GM12878 (cell line): ENCODE measurements at regions of chr14 and their contacts with region 1.

Region 1: DNA sequence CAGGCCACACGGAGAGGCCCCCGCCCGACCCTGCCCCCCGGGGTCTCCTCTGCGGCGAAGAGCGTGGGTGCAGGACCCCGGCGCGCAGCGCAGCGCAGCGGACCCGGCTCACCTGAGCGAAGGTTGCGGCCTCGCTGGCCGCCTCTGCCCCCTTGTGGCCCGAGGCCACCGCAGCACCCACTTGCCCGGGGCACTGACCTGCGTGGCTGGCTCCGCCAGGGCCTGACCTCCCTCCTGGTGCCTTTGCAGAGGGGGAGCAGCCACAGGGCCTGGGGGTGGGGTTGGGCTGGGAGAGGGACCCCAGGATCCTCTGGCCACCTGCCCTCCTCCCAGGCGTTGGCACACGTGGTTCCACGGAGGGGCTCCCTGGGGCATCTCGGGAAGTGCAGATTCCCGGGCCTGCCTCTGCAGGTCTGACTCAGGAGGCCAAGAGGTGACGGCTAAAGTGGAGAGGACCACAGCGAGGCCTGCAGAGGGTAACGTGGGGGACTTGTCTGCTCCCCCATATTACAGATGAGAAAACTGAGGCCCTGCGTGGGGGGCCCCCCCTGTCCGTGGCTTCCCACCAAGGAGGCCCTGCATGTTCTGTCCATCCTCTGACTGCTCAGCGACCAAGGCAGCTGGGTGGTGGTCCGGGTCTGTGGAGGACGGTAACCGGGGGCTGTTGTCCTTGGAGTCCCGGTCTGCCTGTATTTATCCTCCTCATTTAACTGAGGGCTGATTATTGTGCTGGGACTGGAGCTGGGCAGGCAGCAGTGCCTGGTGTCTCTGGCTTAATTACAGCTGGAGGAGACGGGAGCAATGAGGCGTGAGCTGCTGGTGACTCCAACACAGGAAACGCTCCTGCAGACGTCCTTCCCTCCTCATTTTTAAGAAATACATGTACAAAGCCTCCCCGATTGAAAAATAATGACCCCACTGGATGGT is 67.9 kb upstream of the BEGAIN start:
- DNase-seq: no peak
- ATAC-seq: peak; percentile 92
- H3K4me3 ChIP-seq: no peak overlapping the region
- H3K27ac ChIP-seq: no peak overlapping the region
- H3K4me1 ChIP-seq: peaks cover 8% of the 10 kb centered on the region; the same call in 1 of the 2 replicates
- H3K27me3 ChIP-seq: no peaks in the 10 kb centered on the region; a peak in 2 of 4 replicates
- CTCF ChIP-seq: peak; percentile 52 to 71 (median 54)
- EP300 ChIP-seq: no peak
- POLR2A ChIP-seq: no peak
- RAD21 ChIP-seq: peak; percentile 48

Region 2: GRCh38 chr14:100440187-100440631 is 214.9 kb before region 1 on chr14:
- CTCF ChIA-PET with region 1: interaction called, 13 read pairs
- POLR2A ChIA-PET with region 1: no interaction called
- RAD21 ChIA-PET with region 1: interaction called, 4 read pairs
- SMC1A ChIA-PET with region 1: interaction called, 4 read pairs
- in situ Hi-C with region 1: no loop called
- intact Hi-C with region 1: no loop called
- DNase-seq: no peak
- ATAC-seq: peak; percentile 78
- H3K4me3 ChIP-seq: no peak overlapping the region
- H3K27ac ChIP-seq: no peak overlapping the region
- H3K4me1 ChIP-seq: peaks cover under 1% of the 10 kb centered on the region; the same call in 1 of the 2 replicates
- H3K27me3 ChIP-seq: no peaks in the 10 kb centered on the region
- CTCF ChIP-seq: peak; percentile 43 to 71 (median 51); a peak in 5 of 6 replicates
- EP300 ChIP-seq: no peak
- POLR2A ChIP-seq: no peak
- RAD21 ChIP-seq: peak; percentile 83

Region 3: GRCh38 chr14:100677554-100678468 is 22.7 kb after region 1 on chr14:
- CTCF ChIA-PET with region 1: no interaction called
- POLR2A ChIA-PET with region 1: no interaction called
- RAD21 ChIA-PET with region 1: no interaction called
- SMC1A ChIA-PET with region 1: no interaction called
- in situ Hi-C with region 1: no loop called
- intact Hi-C with region 1: no loop called
- DNase-seq: no peak
- ATAC-seq: no peak
- H3K4me3 ChIP-seq: no peak overlapping the region
- H3K27ac ChIP-seq: no peak overlapping the region
- H3K4me1 ChIP-seq: no peaks in the 10 kb centered on the region
- H3K27me3 ChIP-seq: peaks cover 0 to 3% of the 10 kb centered on the region in 2 experiments; a peak in 2 of 4 replicates
- CTCF ChIP-seq: no peak
- EP300 ChIP-seq: no peak
- POLR2A ChIP-seq: no peak
- RAD21 ChIP-seq: no peak

Region 4: DNA sequence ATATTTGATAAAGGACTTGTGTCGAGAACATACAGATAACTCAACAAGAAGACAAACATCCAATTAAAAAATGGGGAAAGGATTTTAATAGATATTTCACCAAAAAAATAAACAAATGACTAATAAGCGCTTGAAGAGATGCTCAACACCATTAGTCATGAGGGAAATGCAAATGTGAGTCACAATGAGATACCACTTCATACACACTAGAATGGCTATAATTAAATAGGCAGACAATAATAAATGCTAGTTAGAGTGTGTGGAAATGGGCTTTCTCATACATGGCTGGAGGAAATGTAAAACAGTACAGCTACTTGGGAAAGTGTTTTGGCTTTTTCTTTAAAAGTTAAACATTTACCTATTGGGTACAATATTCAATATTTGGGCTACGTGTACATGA is 106.4 kb after region 1 on chr14:
- CTCF ChIA-PET with region 1: no interaction called
- POLR2A ChIA-PET with region 1: no interaction called
- RAD21 ChIA-PET with region 1: no interaction called
- SMC1A ChIA-PET with region 1: no interaction called
- in situ Hi-C with region 1: no loop called
- intact Hi-C with region 1: no loop called
- DNase-seq: no peak
- ATAC-seq: no peak
- H3K4me3 ChIP-seq: no peak overlapping the region
- H3K27ac ChIP-seq: no peak overlapping the region
- H3K4me1 ChIP-seq: no peaks in the 10 kb centered on the region
- H3K27me3 ChIP-seq: no peaks in the 10 kb centered on the region; a peak in 1 of 4 replicates
- CTCF ChIP-seq: no peak
- EP300 ChIP-seq: no peak
- POLR2A ChIP-seq: no peak
- RAD21 ChIP-seq: no peak

Region 5: DNA sequence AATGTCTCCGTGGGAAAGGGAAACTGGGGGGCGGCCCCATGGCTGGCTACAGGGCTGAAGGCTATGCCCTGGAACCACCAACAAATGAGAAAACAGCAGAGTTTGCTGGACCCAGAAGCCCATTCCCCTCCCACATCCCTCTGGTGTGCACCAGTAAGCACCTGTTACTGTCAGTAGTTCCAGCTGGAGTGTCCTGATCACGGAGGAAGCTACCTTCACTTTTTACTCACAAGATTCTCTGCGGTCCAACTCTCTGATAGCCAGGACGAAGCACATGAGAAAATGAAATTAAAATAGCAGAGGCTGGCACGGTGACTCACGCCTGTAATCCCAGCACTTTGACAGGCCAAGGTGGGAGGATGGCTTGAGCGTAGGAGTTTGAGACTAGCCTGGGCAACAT is 148.1 kb after region 1 on chr14:
- CTCF ChIA-PET with region 1: no interaction called
- POLR2A ChIA-PET with region 1: no interaction called
- RAD21 ChIA-PET with region 1: no interaction called
- SMC1A ChIA-PET with region 1: no interaction called
- in situ Hi-C with region 1: no loop called
- intact Hi-C with region 1: no loop called
- DNase-seq: no peak
- ATAC-seq: no peak
- H3K4me3 ChIP-seq: no peak overlapping the region
- H3K27ac ChIP-seq: no peak overlapping the region
- H3K4me1 ChIP-seq: no peaks in the 10 kb centered on the region
- H3K27me3 ChIP-seq: no peaks in the 10 kb centered on the region
- CTCF ChIP-seq: no peak
- EP300 ChIP-seq: no peak
- POLR2A ChIP-seq: no peak
- RAD21 ChIP-seq: no peak

Region 6: DNA sequence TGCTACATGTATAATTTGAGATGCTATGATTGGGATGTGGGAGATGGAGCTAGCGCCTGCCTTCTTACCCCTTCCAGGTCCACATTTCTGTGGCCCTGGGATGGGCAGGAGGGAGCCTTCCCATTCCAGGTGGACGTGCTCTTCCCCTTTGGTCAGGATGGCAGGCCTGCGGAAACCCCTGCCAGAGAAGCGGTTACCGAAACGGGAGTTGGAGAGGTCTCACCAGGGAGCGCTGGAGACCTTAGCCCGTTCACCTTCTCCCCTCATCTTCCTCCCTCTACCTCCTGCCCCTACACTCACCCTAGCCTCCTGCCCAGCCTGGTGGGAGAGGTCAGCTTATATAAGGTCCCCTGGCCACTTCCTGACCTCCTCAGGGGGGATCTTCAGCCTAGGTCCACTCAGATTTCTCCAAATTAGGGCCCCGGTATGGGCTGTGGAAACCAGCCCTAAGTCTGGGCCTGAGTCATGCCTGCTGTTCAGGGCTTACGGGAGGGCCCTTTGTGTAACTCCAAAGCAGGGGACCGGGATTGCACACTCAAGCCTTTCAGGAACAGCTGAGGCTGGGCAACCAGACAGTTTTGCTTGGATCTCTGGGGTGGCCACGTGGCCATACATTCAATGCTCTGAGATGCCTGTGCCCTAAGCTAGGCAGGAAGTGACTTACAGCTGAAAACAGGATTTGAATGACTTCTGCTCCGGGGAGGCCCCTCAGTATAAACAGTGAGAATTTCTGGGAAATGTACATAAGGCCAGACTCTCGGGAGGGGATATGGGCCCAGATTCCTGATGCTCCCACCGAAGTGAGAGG is 160.6 kb after region 1 on chr14:
- CTCF ChIA-PET with region 1: no interaction called
- POLR2A ChIA-PET with region 1: no interaction called
- RAD21 ChIA-PET with region 1: no interaction called
- SMC1A ChIA-PET with region 1: no interaction called
- in situ Hi-C with region 1: no loop called
- intact Hi-C with region 1: no loop called
- DNase-seq: no peak
- ATAC-seq: no peak
- H3K4me3 ChIP-seq: no peak overlapping the region
- H3K27ac ChIP-seq: no peak overlapping the region
- H3K4me1 ChIP-seq: no peaks in the 10 kb centered on the region
- H3K27me3 ChIP-seq: no peaks in the 10 kb centered on the region
- CTCF ChIP-seq: no peak
- EP300 ChIP-seq: no peak
- POLR2A ChIP-seq: no peak
- RAD21 ChIP-seq: no peak